ENCODE measurements at regions of chr19 and their contacts with region 1.

Region 1: DNA sequence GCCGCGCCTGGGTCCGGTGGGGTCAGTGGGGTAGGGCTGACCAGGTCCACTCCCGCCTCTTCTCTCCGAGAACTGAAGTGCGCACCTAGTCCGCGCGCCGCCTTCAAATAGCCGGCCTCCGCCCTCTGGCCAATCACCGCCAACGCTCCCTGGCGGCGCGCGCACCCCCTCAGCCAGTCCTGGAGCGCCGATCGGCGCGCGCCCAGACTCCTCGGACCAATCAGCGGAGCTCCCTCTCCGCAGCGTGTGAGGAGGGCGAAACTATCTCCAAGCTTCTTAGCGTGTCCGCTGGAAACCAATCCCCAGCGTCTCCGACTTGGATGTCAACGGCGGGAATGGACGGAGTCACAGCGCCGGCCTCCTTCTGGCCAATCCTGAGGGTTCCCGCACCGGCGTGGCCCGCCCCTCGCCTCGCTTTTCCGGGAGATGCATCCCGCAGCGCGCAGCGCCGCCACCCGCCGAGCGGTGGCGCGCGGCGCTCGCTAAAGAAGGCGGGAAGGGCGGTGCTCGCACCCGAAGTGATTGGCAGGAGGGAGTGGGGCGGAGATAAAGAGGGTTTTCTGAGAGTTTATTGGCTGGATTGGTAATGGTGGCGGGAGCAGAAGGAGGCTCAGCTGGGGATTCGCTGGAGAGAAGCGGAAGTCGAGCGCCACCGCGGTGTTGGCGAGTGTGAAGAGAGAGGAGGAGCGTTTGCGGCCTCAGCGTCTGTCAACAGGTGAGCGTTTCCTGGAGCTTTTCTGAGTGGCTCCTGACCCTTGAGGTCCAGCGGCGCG is at the start of gene ASF1B:
- DNase-seq: peak; percentile 91 to 99 (median 97)
- ATAC-seq: peak; percentile 80
- H3K4me3 ChIP-seq: peak within 1 kb of the TSS; percentile 86
- H3K4me3 Mint-ChIP-seq: peak within 1 kb of the TSS; percentile 97
- H3K27ac ChIP-seq: peak within 1 kb of the TSS; percentile 92 to 94
- H3K27ac Mint-ChIP-seq: peak within 1 kb of the TSS; percentile 87
- H3K4me1 ChIP-seq: peaks cover 34% of the 10 kb centered on the region
- H3K4me1 Mint-ChIP-seq: peaks cover 34% of the 10 kb centered on the region
- H3K27me3 ChIP-seq: no peaks in the 10 kb centered on the region
- H3K27me3 Mint-ChIP-seq: no peaks in the 10 kb centered on the region
- CTCF ChIP-seq: peak; percentile 99
- total RNA-seq, gene ASF1B: 0.59 to 0.77 TPM

Region 2: GRCh38 chr19:13880059-13881043 is 256.3 kb before region 1 on chr19:
- CTCF ChIA-PET with region 1: interaction called, 6 read pairs
- POLR2A ChIA-PET with region 1: interaction called, 6 read pairs
- intact Hi-C with region 1: loop called (anchors 1 to 2 kb)
- DNase-seq: peak; percentile 92 to 99 (median 98)
- ATAC-seq: peak; percentile 96
- H3K4me3 ChIP-seq: peak overlapping the region; percentile 27
- H3K4me3 Mint-ChIP-seq: peak overlapping the region; percentile 70
- H3K27ac ChIP-seq: peak overlapping the region; percentile 14 to 32
- H3K27ac Mint-ChIP-seq: peak overlapping the region; percentile 76
- H3K4me1 ChIP-seq: peaks cover 57% of the 10 kb centered on the region
- H3K4me1 Mint-ChIP-seq: peaks cover 41% of the 10 kb centered on the region
- H3K27me3 ChIP-seq: no peaks in the 10 kb centered on the region
- H3K27me3 Mint-ChIP-seq: no peaks in the 10 kb centered on the region
- CTCF ChIP-seq: peak; percentile 99

Region 3: DNA sequence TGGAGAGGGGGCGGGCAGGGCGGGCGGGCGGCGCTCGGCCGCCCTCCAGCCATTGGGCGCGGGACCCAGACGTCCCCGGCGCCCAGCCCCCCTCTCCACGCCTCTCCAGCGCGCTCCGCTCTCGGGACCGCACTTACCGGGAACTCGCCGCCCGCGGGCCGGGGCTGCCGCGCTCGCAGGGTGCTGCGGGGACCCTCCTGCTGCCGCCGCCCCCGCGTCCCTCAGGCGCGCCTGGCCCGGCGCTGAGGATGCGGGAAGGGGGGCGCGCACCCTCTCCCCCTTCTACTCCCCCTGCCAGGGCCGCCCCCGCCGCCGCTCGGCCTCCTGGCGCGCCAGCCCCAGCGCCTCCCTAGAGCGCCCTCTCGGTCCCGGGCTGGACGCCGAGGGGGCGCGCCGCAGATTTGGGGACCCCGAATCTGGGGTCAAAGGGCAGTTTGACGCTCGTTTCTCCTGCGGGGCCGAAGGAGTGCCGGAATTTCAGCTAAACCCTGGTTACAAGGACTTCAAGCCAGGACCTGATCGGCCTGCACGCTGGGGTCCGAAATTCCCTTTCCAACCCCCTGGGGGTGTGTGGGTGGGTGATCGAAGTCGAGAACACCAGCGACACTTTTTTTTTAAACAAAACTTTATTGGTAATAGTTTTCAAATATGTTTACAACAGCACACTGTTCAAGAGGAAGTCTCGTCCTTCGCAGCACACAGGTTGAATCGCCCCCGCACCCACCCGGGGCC is 45.4 kb before region 1 on chr19:
- CTCF ChIA-PET with region 1: interaction called, 14 read pairs
- POLR2A ChIA-PET with region 1: interaction called, 39 read pairs
- intact Hi-C with region 1: loop called in 1 of 2 experiments (anchors 2 kb)
- DNase-seq: peak; percentile 37 to 85 (median 58)
- ATAC-seq: peak; percentile 49
- H3K4me3 ChIP-seq: peak overlapping the region; percentile 71
- H3K4me3 Mint-ChIP-seq: peak overlapping the region; percentile 100
- H3K27ac ChIP-seq: peak overlapping the region; percentile 43 to 84
- H3K27ac Mint-ChIP-seq: peak overlapping the region; percentile 87
- H3K4me1 ChIP-seq: peaks cover 21% of the 10 kb centered on the region
- H3K4me1 Mint-ChIP-seq: peaks cover 27% of the 10 kb centered on the region
- H3K27me3 ChIP-seq: no peaks in the 10 kb centered on the region
- H3K27me3 Mint-ChIP-seq: no peaks in the 10 kb centered on the region
- CTCF ChIP-seq: peak; percentile 27

Region 4: GRCh38 chr19:14198384-14199376 is 62.0 kb after region 1 on chr19:
- CTCF ChIA-PET with region 1: interaction called, 7 read pairs
- POLR2A ChIA-PET with region 1: no interaction called
- intact Hi-C with region 1: loop called in 1 of 2 experiments (anchors 5 kb)
- DNase-seq: no peak
- ATAC-seq: no peak
- H3K4me3 ChIP-seq: no peak overlapping the region
- H3K4me3 Mint-ChIP-seq: no peak overlapping the region
- H3K27ac ChIP-seq: no peak overlapping the region
- H3K27ac Mint-ChIP-seq: no peak overlapping the region
- H3K4me1 ChIP-seq: peaks cover 20% of the 10 kb centered on the region
- H3K4me1 Mint-ChIP-seq: peaks cover 32% of the 10 kb centered on the region
- H3K27me3 ChIP-seq: no peaks in the 10 kb centered on the region
- H3K27me3 Mint-ChIP-seq: no peaks in the 10 kb centered on the region
- CTCF ChIP-seq: no peak

Region 5: GRCh38 chr19:14383661-14384555 is 247.2 kb after region 1 on chr19:
- CTCF ChIA-PET with region 1: interaction called, 16 read pairs
- POLR2A ChIA-PET with region 1: interaction called, 18 read pairs
- intact Hi-C with region 1: no loop called
- DNase-seq: peak in 5 of 14 experiments; percentile 46 to 84 (median 79)
- ATAC-seq: no peak
- H3K4me3 ChIP-seq: peak overlapping the region; percentile 92
- H3K4me3 Mint-ChIP-seq: peak overlapping the region; percentile 93
- H3K27ac ChIP-seq: peak overlapping the region; percentile 96 to 99
- H3K27ac Mint-ChIP-seq: peak overlapping the region; percentile 94
- H3K4me1 ChIP-seq: peaks cover 81% of the 10 kb centered on the region
- H3K4me1 Mint-ChIP-seq: peaks cover 52% of the 10 kb centered on the region
- H3K27me3 ChIP-seq: no peaks in the 10 kb centered on the region
- H3K27me3 Mint-ChIP-seq: no peaks in the 10 kb centered on the region
- CTCF ChIP-seq: no peak

Region 6: DNA sequence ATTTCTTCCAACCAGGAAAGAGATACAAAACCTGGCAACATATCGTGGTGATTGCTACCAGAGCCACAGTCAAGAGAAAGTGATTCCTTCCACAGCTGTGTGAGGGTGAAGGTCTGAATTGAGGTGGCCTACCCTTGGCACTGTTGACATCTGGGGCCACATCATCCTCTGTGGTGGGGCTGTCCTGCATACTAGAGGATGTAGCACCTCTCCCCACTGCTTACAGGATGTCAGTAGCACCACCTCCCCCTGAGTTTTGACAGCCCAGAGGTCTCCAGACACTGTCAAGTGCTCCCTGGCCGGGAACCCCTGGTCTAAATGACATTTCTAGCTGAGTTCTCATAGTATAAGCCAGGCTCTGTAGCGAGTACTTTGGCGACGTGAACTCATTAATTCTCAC is 323.0 kb after region 1 on chr19:
- CTCF ChIA-PET with region 1: no interaction called
- POLR2A ChIA-PET with region 1: no interaction called
- intact Hi-C with region 1: no loop called
- DNase-seq: peak in 2 of 14 experiments; percentile 35 to 83
- ATAC-seq: no peak
- H3K4me3 ChIP-seq: no peak overlapping the region
- H3K4me3 Mint-ChIP-seq: no peak overlapping the region
- H3K27ac ChIP-seq: no peak overlapping the region
- H3K27ac Mint-ChIP-seq: no peak overlapping the region
- H3K4me1 ChIP-seq: no peaks in the 10 kb centered on the region
- H3K4me1 Mint-ChIP-seq: no peaks in the 10 kb centered on the region
- H3K27me3 ChIP-seq: no peaks in the 10 kb centered on the region
- H3K27me3 Mint-ChIP-seq: no peaks in the 10 kb centered on the region
- CTCF ChIP-seq: no peak

Region 7: GRCh38 chr19:14472202-14472938 is 335.7 kb after region 1 on chr19:
- CTCF ChIA-PET with region 1: interaction called, 4 read pairs
- POLR2A ChIA-PET with region 1: interaction called, 11 read pairs
- intact Hi-C with region 1: loop called in 1 of 2 experiments (anchors 2 kb)
- DNase-seq: peak; percentile 77 to 91 (median 86)
- ATAC-seq: peak; percentile 84
- H3K4me3 ChIP-seq: peak overlapping the region; percentile 34
- H3K4me3 Mint-ChIP-seq: peak overlapping the region; percentile 55
- H3K27ac ChIP-seq: no peak overlapping the region
- H3K27ac Mint-ChIP-seq: no peak overlapping the region
- H3K4me1 ChIP-seq: peaks cover 31% of the 10 kb centered on the region
- H3K4me1 Mint-ChIP-seq: peaks cover 36% of the 10 kb centered on the region
- H3K27me3 ChIP-seq: peaks cover 19 to 22% of the 10 kb centered on the region in 2 experiments
- H3K27me3 Mint-ChIP-seq: peaks cover 33% of the 10 kb centered on the region
- CTCF ChIP-seq: peak; percentile 98